Ascending aorta (tissue), 2 donors: ENCODE measurements at regions of chr19 and their contacts with region 1.

Region 1: GRCh38 chr19:49497047-49497788 is 984 bp downstream of the RPS11 start:
- DNase-seq: peak in 1 of 2 donors; percentile 86
- H3K4me3 ChIP-seq: peak overlapping the region; percentile 77 to 81
- H3K27ac ChIP-seq: peak overlapping the region; percentile 93 to 95
- H3K4me1 ChIP-seq: peaks cover 13 to 20% of the 10 kb centered on the region in 2 donors
- H3K27me3 ChIP-seq: no peaks in the 10 kb centered on the region
- CTCF ChIP-seq: no peak

Region 2: GRCh38 chr19:49451430-49452181 is 45.6 kb before region 1 on chr19 and contains the start of gene PIH1D1:
- intact Hi-C with region 1: loop called (anchors 2 kb)
- DNase-seq: peak; percentile 94 to 99
- H3K4me3 ChIP-seq: peak within 1 kb of the TSS; percentile 73 to 81
- H3K27ac ChIP-seq: peak within 1 kb of the TSS; percentile 88 to 95
- H3K4me1 ChIP-seq: peaks cover 0 to 10% of the 10 kb centered on the region in 2 donors
- H3K27me3 ChIP-seq: no peaks in the 10 kb centered on the region
- CTCF ChIP-seq: no peak
- total RNA-seq, gene PIH1D1: 177 TPM

Region 3: GRCh38 chr19:49528211-49528771 is 31.1 kb after region 1 on chr19:
- intact Hi-C with region 1: loop called (anchors 1 kb)
- DNase-seq: peak in 1 of 2 donors; percentile 75
- H3K4me3 ChIP-seq: peak overlapping the region; percentile 44 to 74
- H3K27ac ChIP-seq: peak overlapping the region; percentile 71 to 81
- H3K4me1 ChIP-seq: peaks cover 3 to 7% of the 10 kb centered on the region in 2 donors
- H3K27me3 ChIP-seq: no peaks in the 10 kb centered on the region
- CTCF ChIP-seq: no peak

Region 4: GRCh38 chr19:49640113-49640898 is 143.1 kb after region 1 on chr19 and contains the start of gene RRAS:
- intact Hi-C with region 1: loop called (anchors 5 kb)
- DNase-seq: peak; percentile 99 to 100
- H3K4me3 ChIP-seq: peak within 1 kb of the TSS; percentile 80 to 87
- H3K27ac ChIP-seq: peak within 1 kb of the TSS; percentile 99 to 100
- H3K4me1 ChIP-seq: peaks cover 20 to 24% of the 10 kb centered on the region in 2 donors
- H3K27me3 ChIP-seq: no peaks in the 10 kb centered on the region
- CTCF ChIP-seq: no peak
- total RNA-seq, gene RRAS: 161 TPM